Mammary epithelial cell (primary cell): ENCODE measurements at regions of chr1 and their contacts with region 1.

Region 1: DNA sequence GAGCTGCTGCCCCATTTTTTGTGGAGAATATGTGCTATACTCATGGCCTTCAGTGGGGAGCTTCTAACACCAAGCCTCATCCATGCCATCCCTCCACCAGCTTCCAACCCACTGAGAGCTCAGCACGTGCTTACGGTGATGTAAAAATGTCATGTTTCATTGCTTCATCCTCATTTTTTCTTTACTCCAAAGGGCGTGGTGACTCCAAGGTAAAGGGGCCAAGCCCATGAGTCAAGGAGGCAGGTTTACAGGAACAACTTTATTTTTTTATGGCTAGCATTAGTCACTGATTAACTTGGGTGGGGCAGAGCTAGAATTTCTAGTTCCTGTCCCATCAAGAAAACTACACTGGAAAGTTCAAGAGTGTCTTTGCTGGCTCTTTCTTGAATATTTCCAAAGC is at the start of gene C1orf226:
- DNase-seq: peak; percentile 81
- H3K4me3 ChIP-seq: no peak within 1 kb of the TSS
- H3K27ac ChIP-seq: peak within 1 kb of the TSS; percentile 53
- H3K4me1 ChIP-seq: peaks cover 17% of the 10 kb centered on the region
- H3K27me3 ChIP-seq: no peaks in the 10 kb centered on the region
- CTCF ChIP-seq: no peak
- total RNA-seq, gene C1orf226: 1.5 to 2.2 TPM

Region 2: GRCh38 chr1:162285149-162285561 is 96.2 kb before region 1 on chr1:
- CTCF ChIA-PET with region 1: no interaction called
- dilution Hi-C with region 1: no loop called
- in situ Hi-C with region 1: no loop called
- intact Hi-C with region 1: no loop called
- DNase-seq: peak; percentile 84
- H3K4me3 ChIP-seq: no peak overlapping the region
- H3K27ac ChIP-seq: no peak overlapping the region
- H3K4me1 ChIP-seq: peaks cover 13% of the 10 kb centered on the region
- H3K27me3 ChIP-seq: no peaks in the 10 kb centered on the region
- CTCF ChIP-seq: no peak

Region 3: GRCh38 chr1:162310337-162310736 is 71.0 kb before region 1 on chr1:
- CTCF ChIA-PET with region 1: no interaction called
- dilution Hi-C with region 1: loop called (anchors 5 kb)
- in situ Hi-C with region 1: no loop called
- intact Hi-C with region 1: no loop called
- DNase-seq: peak; percentile 17
- H3K4me3 ChIP-seq: no peak overlapping the region
- H3K27ac ChIP-seq: no peak overlapping the region
- H3K4me1 ChIP-seq: peaks cover 9% of the 10 kb centered on the region
- H3K27me3 ChIP-seq: no peaks in the 10 kb centered on the region
- CTCF ChIP-seq: no peak